ENCODE measurements at regions of chr6 and their contacts with region 1.

Region 1: DNA sequence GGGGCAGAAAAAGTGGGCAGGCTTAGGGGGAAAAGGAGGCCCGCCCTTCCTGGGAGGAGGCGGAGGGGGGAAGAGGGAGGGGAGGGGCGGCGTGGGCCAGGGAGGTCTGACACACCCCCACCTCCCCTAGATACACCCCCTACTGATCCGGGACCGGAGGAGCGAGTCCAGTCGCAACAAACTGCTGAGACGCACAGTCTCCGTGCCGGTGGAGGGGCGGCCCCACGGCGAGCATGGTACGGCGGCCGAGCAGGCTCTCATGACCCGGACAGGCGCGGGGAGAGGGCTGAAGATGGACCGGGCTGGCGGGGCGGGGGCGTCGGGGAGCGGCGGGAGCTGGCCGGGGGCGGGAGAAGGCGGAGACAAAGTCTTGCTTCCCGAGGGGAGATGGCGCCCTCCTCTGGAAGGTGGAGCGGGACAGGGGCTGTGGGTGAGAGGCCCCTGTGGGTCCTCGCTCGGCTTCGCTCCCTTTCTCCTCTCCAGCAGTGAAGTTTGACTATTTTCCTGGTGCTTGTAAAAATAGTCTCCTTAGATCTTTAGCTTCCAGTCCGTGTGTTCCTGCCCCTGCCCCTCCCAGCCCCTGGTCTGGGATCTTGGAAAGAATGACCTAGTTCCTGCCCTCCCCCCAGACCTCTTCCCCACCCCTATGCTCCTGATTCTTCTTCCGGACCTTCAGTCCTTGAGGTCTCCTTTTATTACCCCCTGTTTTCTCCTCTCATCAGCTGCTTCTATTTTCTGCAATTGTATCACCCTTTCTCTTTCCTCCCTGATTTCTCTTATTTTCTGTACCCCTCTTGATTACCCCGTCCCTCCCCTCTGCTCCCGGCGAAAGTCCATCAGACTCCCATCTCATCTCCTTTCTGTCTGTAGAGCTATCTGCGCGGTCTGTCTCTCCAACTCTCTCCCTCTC is 6.1 kb downstream of the SYNGAP1 start:
- DNase-seq: peak; percentile 83
- H3K4me3 Mint-ChIP-seq: peak overlapping the region; percentile 97
- H3K27ac Mint-ChIP-seq: peak overlapping the region; percentile 85
- H3K4me1 Mint-ChIP-seq: peaks cover 61% of the 10 kb centered on the region
- H3K27me3 Mint-ChIP-seq: no peaks in the 10 kb centered on the region
- CTCF ChIP-seq: peak; percentile 68

Region 2: GRCh38 chr6:33317669-33318425 is 108.1 kb before region 1 on chr6 and contains the start of gene ZBTB22:
- CTCF ChIA-PET with region 1: no interaction called
- POLR2A ChIA-PET with region 1: interaction called, 14 read pairs
- intact Hi-C with region 1: no loop called
- DNase-seq: peak; percentile 100
- H3K4me3 Mint-ChIP-seq: peak within 1 kb of the TSS; percentile 81
- H3K27ac Mint-ChIP-seq: peak within 1 kb of the TSS; percentile 80
- H3K4me1 Mint-ChIP-seq: peaks cover 66% of the 10 kb centered on the region
- H3K27me3 Mint-ChIP-seq: no peaks in the 10 kb centered on the region
- CTCF ChIP-seq: no peak
- total RNA-seq, gene ZBTB22: 12.3 and 15.5 TPM in 2 replicates

Region 3: DNA sequence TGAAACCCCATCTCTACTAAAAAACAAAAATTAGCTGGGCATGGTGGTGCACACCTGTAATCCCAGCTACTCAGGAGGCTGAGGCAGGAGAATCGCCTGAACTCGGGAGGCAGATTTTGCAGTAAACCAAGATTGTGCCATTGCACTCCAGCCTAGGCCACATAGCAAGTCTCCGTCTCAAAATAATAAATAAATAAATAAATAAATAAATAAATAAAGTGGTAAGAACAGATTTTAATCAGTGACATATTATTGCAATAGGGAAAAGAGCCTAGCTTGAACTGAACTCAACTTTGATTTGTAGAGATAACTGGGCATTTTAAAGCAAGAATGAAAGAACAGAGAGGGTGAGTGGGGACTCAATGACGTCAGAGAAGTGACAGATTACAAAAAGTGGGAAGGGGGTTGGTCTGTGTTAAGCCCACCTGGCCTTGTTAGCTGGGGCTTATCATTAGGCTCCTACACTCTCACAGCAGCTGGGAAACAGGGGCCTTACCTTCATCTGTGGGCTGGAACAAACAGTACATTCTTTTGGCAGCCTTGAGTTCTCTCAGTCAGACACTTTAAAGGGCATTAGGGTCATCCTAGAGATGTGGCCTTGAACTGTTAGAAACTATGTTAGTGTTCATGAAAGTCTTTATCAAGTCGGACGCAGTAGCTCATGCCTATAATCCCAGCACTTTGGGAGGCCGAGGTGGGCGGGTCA is 58.8 kb before region 1 on chr6:
- CTCF ChIA-PET with region 1: no interaction called
- POLR2A ChIA-PET with region 1: no interaction called
- intact Hi-C with region 1: no loop called
- DNase-seq: no peak
- H3K4me3 Mint-ChIP-seq: no peak overlapping the region
- H3K27ac Mint-ChIP-seq: no peak overlapping the region
- H3K4me1 Mint-ChIP-seq: peaks cover 5% of the 10 kb centered on the region
- H3K27me3 Mint-ChIP-seq: no peaks in the 10 kb centered on the region
- CTCF ChIP-seq: no peak

Region 4: DNA sequence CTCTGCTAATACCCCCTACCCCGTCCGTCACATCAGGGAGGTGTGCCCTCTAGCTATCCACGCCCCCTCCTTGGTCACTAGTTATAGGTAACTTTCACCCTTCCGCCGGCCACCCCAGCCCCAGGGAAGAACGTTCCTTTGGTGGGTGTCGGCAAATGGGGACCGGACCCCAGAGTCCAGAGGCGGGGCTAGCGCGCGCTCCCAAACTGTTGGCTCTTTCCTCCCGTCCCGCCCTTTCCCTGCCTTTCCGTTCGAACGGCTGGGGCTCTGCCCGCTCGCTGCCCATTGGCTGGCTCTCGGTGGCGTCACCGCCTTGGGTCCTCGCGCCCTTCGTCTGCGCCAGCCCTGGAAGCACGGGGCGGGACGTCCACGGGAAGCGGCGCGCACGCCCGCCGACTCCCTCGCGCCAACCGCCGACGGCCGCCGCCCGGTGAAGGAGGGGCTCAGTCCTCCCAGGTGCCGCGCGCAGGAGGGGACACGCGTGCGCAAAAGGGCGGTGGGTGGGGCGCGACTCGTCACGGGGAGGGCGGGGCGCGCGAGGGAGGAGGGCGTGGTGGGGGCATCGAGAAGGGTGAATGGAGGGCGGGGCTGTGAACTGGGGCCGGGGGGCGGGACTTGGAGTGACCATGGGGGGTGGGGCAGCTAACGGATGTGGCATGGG is 15.7 kb before region 1 on chr6:
- CTCF ChIA-PET with region 1: interaction called, 3 read pairs
- POLR2A ChIA-PET with region 1: interaction called, 35 read pairs
- intact Hi-C with region 1: no loop called
- DNase-seq: peak; percentile 98
- H3K4me3 Mint-ChIP-seq: peak overlapping the region; percentile 95
- H3K27ac Mint-ChIP-seq: peak overlapping the region; percentile 95
- H3K4me1 Mint-ChIP-seq: peaks cover 22% of the 10 kb centered on the region
- H3K27me3 Mint-ChIP-seq: no peaks in the 10 kb centered on the region
- CTCF ChIP-seq: no peak

Region 5: GRCh38 chr6:33579828-33580714 is 154.1 kb after region 1 on chr6 and contains the start of gene BAK1:
- CTCF ChIA-PET with region 1: interaction called, 3 read pairs
- POLR2A ChIA-PET with region 1: interaction called, 12 read pairs
- intact Hi-C with region 1: no loop called
- DNase-seq: peak; percentile 90
- H3K4me3 Mint-ChIP-seq: peak within 1 kb of the TSS; percentile 85
- H3K27ac Mint-ChIP-seq: peak within 1 kb of the TSS; percentile 97
- H3K4me1 Mint-ChIP-seq: peaks cover 28% of the 10 kb centered on the region
- H3K27me3 Mint-ChIP-seq: no peaks in the 10 kb centered on the region
- CTCF ChIP-seq: peak; percentile 42
- total RNA-seq, gene BAK1: 45.8 and 57.7 TPM in 2 replicates

Measured in MCF 10A (cell line).